Heart left ventricle (tissue), 16 donors: ENCODE measurements at regions of chr1 and their contacts with region 1.

Region 1: GRCh38 chr1:33152685-33153432 is 29.0 kb downstream of the TRIM62 start:
- DNase-seq: peak; percentile 89 to 94 (median 90)
- ATAC-seq: peak; percentile 91 to 97 (median 94)
- H3K4me3 ChIP-seq: no peak overlapping the region
- H3K27ac ChIP-seq: peak overlapping the region in 11 of 12 donors; percentile 37 to 85 (median 77)
- H3K4me1 ChIP-seq: peaks cover 12 to 48% (median 35%) of the 10 kb centered on the region in 12 donors
- H3K27me3 ChIP-seq: no peaks in the 10 kb centered on the region
- CTCF ChIP-seq: no peak
- POLR2A ChIP-seq: no peak

Region 2: DNA sequence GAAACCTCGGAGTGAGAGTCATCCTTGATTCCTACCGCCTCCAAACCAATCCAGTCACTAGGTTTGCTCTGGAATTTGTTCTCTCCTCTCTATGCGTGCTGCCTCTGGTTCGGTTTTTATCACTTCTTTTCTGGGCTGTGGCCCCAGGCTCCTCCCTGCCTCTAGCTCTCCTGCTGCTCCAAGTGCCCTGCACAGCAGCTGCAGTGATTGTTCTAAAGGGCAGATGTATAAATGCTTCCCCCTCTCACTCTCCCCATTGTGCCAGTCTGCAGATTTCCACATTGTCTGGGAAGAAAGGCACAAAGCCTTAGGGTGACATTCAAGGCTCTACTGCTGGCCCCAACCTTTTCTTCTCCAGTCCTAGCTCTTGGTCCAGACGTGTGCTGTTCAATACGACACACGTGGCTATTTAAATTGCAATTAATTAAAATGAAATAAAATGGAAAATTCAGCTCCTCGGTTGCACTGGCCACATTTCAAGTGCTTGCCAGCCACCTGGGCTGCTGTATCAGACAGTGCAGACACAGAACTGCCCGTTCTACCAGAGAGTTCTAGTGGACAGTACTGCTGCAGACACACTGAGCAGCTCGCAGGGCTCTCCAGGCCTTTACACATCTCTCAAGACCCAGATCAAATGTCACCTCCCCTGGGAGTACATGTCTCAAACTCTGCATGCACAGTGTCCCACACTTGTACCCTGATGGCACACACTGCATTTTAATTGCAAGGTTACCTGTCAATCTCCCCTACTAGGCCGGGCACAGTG is 16.6 kb after region 1 on chr1:
- intact Hi-C with region 1: loop called in 1 of 10 experiments (anchors 2 kb)
- DNase-seq: no peak
- ATAC-seq: peak; percentile 9 to 39 (median 18)
- H3K4me3 ChIP-seq: no peak overlapping the region
- H3K27ac ChIP-seq: peak overlapping the region in 2 of 12 donors; percentile 31 to 35
- H3K4me1 ChIP-seq: peaks cover 0 to 31% (median 17%) of the 10 kb centered on the region in 12 donors
- H3K27me3 ChIP-seq: no peaks in the 10 kb centered on the region
- CTCF ChIP-seq: no peak
- POLR2A ChIP-seq: no peak

Region 3: DNA sequence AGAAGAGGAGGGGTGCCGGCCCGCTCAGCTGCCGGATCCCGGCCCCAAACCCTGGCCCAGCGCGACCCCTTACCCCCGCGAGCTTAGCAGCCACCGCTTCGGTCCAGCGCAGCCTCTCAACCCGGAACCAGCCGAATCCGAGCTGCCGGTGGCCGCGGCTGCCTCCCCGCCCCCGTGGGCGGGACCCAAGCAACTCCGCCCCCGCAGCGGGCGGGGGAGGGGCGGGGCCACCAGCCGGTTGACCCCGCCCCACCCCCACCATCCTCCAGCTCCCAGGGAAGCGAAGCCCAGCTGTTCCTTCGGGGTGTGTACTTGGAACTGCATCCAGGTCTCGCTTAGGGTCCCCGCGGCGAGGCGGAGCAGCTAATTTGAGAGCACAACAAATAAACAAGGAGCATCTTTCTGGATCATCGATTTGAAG is 29.1 kb after region 1 on chr1 and contains the start of gene TRIM62:
- intact Hi-C with region 1: loop called in 1 of 10 experiments (anchors 2 kb)
- DNase-seq: peak; percentile 90 to 94 (median 92)
- ATAC-seq: peak; percentile 78 to 92 (median 90)
- H3K4me3 ChIP-seq: peak within 1 kb of the TSS; percentile 59 to 93 (median 85)
- H3K27ac ChIP-seq: peak within 1 kb of the TSS; percentile 29 to 89 (median 76)
- H3K4me1 ChIP-seq: peaks cover 0 to 26% (median 9%) of the 10 kb centered on the region in 12 donors
- H3K27me3 ChIP-seq: peaks cover 0 to 4% (median 0%) of the 10 kb centered on the region in 9 donors
- CTCF ChIP-seq: no peak
- POLR2A ChIP-seq: peak in 1 of 2 donors; percentile 57
- total RNA-seq, gene TRIM62: 1.9 to 6.1 (median 3.3) TPM